CD4-positive, alpha-beta T cell (primary cell): ENCODE measurements at regions of chr9 and their contacts with region 1.

Region 1: DNA sequence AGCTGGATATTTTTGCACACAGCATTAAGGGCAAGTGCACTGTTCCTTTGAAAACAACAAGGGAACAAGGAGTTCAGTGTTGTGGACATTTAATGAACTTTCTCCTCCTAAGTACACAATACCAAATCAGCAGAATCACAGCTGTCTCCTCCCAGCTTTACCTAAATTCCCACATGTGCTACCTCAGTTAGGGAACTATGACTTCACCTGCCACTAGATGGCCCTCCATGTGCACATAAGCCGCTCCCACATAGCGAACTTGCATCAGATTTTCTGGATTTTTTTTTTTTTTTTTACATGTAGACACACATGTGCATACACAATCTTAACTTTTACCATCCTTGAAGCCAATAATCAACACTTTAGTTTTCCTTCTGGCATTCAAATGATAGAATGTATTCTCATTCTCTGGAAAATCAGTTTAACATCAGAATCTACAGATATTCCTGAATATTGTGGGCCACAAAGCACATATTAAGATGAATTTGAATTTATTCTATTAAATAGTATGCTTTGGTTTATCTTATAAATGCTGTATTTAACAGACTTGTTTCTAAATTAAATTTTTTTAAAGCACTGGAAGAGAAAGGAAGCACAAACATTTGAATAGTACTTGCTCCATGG is 123.6 kb downstream of the PALM2AKAP2 start:
- DNase-seq: peak; percentile 27 to 82 (median 48)
- ATAC-seq: peak; percentile 67
- H3K4me3 ChIP-seq: no peak overlapping the region
- H3K4me3 Mint-ChIP-seq: no peak overlapping the region
- H3K27ac ChIP-seq: no peak overlapping the region
- H3K27ac Mint-ChIP-seq: no peak overlapping the region
- H3K4me1 ChIP-seq: no peaks in the 10 kb centered on the region
- H3K4me1 Mint-ChIP-seq: no peaks in the 10 kb centered on the region
- H3K27me3 ChIP-seq: no peaks in the 10 kb centered on the region
- H3K27me3 Mint-ChIP-seq: peaks cover 4% of the 10 kb centered on the region
- CTCF ChIP-seq: peak; percentile 85

Region 2: GRCh38 chr9:108786901-108787689 is 1116.5 kb before region 1 on chr9:
- CTCF ChIA-PET with region 1: no interaction called
- POLR2A ChIA-PET with region 1: no interaction called
- intact Hi-C with region 1: no loop called
- DNase-seq: no peak
- ATAC-seq: no peak
- H3K4me3 ChIP-seq: no peak overlapping the region
- H3K4me3 Mint-ChIP-seq: no peak overlapping the region
- H3K27ac ChIP-seq: no peak overlapping the region
- H3K27ac Mint-ChIP-seq: no peak overlapping the region
- H3K4me1 ChIP-seq: no peaks in the 10 kb centered on the region
- H3K4me1 Mint-ChIP-seq: peaks cover 5% of the 10 kb centered on the region
- H3K27me3 ChIP-seq: no peaks in the 10 kb centered on the region
- H3K27me3 Mint-ChIP-seq: no peaks in the 10 kb centered on the region
- CTCF ChIP-seq: no peak

Region 3: DNA sequence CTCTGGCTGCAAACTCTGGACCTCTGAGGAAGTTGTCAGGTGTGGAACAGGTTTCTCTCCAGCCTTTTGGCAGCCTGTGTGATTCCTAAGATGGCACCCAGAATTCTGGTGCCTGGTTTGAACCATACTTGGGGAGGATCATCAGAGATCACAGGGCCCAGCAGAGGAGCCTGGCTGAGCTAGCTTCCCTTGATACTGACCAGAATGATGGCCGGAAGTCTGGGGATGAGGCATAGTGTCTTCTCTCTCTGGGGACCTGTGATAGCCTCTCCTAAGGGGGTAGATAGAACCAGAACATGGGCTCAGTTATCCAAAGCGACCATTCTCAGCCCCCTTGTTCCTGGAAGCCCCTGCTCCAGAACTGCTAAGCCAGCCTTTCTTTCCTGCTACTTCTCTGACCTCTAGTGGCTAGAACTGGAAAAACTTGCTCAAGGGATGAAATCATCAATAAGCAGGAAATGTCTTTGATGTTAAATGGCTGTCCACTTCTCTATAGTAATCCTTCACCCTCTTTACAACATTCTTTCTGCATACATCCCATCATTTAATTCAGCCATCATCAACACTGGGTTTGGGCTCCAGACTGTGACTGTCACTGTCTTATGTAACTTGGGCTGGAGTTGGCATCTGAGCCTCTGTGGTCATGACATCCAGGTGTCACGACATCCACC is 249.2 kb after region 1 on chr9:
- CTCF ChIA-PET with region 1: interaction called, 7 read pairs
- POLR2A ChIA-PET with region 1: interaction called, 7 read pairs
- intact Hi-C with region 1: loop called (anchors 1 kb)
- DNase-seq: peak in 3 of 14 experiments; percentile 58 to 66 (median 63)
- ATAC-seq: no peak
- H3K4me3 ChIP-seq: no peak overlapping the region
- H3K4me3 Mint-ChIP-seq: no peak overlapping the region
- H3K27ac ChIP-seq: no peak overlapping the region
- H3K27ac Mint-ChIP-seq: no peak overlapping the region
- H3K4me1 ChIP-seq: peaks cover 43% of the 10 kb centered on the region
- H3K4me1 Mint-ChIP-seq: peaks cover 80% of the 10 kb centered on the region
- H3K27me3 ChIP-seq: no peaks in the 10 kb centered on the region
- H3K27me3 Mint-ChIP-seq: no peaks in the 10 kb centered on the region
- CTCF ChIP-seq: peak; percentile 71

Region 4: GRCh38 chr9:110170357-110171257 is 267.0 kb after region 1 on chr9:
- CTCF ChIA-PET with region 1: no interaction called
- POLR2A ChIA-PET with region 1: no interaction called
- intact Hi-C with region 1: no loop called
- DNase-seq: no peak
- ATAC-seq: no peak
- H3K4me3 ChIP-seq: no peak overlapping the region
- H3K4me3 Mint-ChIP-seq: no peak overlapping the region
- H3K27ac ChIP-seq: no peak overlapping the region
- H3K27ac Mint-ChIP-seq: no peak overlapping the region
- H3K4me1 ChIP-seq: peaks cover 8% of the 10 kb centered on the region
- H3K4me1 Mint-ChIP-seq: peaks cover 6% of the 10 kb centered on the region
- H3K27me3 ChIP-seq: no peaks in the 10 kb centered on the region
- H3K27me3 Mint-ChIP-seq: no peaks in the 10 kb centered on the region
- CTCF ChIP-seq: no peak